ENCODE measurements at regions of chr1 and their contacts with region 1.

Region 1: GRCh38 chr1:175023043-175023921 is at the start of gene MRPS14:
- DNase-seq: peak; percentile 95
- H3K4me3 Mint-ChIP-seq: peak within 1 kb of the TSS; percentile 95
- H3K27ac Mint-ChIP-seq: peak within 1 kb of the TSS; percentile 93
- H3K4me1 Mint-ChIP-seq: peaks cover 19% of the 10 kb centered on the region
- H3K27me3 Mint-ChIP-seq: no peaks in the 10 kb centered on the region
- total RNA-seq, gene MRPS14: 29.2 and 29.9 TPM in 2 replicates

Region 2: DNA sequence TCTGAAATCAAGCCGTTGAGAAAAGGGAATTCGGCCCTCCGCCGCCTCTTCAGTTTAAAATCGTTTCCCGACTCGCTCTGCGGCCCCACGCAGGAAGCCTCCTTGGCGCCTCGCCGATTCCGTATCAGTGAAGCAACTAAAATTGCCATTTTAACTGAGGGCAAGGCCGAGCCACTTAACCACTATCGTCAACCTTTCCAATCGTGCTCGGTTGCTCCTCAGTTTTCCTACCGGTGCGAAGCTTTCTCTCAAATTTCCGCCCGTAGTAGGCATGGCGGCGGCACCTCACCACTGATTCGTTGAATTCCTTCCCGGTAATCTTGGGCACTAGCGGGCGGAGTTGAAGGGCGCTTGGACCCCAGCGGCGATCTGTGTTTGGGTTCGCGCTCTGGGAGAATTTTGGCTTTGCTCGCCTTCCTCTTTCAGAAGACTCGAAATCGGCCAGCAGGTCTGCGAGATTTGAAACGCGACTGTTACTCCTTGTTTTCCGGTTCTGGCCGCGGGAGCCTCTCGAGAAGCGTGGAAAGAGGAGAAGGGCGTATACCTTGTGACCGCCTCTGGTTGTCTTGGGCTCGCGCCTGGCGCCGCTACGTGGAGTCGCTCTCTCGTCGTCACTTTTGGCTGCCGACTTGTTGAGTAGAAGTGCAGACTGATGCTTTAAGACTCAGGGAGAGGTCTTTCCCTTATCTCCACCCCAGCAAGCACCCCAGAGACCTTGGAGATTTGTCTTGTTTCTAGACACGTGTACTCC is 1198.8 kb before region 1 on chr1 and contains the starts of genes CENPL and DARS2:
- intact Hi-C with region 1: loop called (anchors 1 kb)
- DNase-seq: peak; percentile 90
- H3K4me3 Mint-ChIP-seq: peak within 1 kb of the TSS; percentile 91
- H3K27ac Mint-ChIP-seq: peak within 1 kb of the TSS; percentile 95
- H3K4me1 Mint-ChIP-seq: peaks cover 48% of the 10 kb centered on the region
- H3K27me3 Mint-ChIP-seq: no peaks in the 10 kb centered on the region
- total RNA-seq, gene CENPL: 23.6 and 25.7 TPM in 2 replicates
- total RNA-seq, gene DARS2: 41.9 TPM in 2 replicates

Region 3: DNA sequence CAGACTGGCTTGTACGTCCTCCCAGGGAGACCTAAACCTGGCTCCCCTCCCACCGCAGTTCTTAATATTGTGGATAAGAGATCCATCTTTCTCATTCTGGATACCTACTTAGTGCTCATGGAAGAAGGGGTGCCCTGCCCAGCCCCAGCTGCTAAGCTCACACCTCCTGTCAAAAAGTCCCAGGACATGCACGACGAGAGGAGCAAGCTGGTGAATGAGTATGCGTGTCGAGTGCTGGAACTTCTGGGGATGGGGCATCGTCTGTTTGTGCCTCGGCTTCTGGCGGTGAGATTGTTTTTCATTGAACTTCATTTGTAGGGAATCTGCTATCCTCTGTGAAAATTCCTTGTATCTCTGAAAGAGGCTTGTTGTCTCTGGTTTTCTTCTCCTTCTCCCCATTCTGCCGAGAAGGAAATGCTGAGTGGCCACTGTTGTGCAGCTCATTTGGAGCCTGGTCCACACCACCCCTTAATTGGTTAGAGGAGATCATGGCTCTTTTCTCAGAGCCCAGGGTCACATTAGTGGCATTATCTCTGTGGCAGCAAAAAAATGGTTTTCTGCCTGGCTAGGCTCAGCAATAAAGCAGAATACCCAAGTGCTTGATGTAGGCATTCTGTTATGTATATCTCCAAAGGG is 222.9 kb before region 1 on chr1:
- intact Hi-C with region 1: loop called (anchors 1 kb)
- DNase-seq: peak; percentile 4
- H3K4me3 Mint-ChIP-seq: no peak overlapping the region
- H3K27ac Mint-ChIP-seq: no peak overlapping the region
- H3K4me1 Mint-ChIP-seq: peaks cover 15% of the 10 kb centered on the region
- H3K27me3 Mint-ChIP-seq: no peaks in the 10 kb centered on the region

Region 4: GRCh38 chr1:174902531-174903099 is 120.7 kb before region 1 on chr1:
- intact Hi-C with region 1: no loop called
- DNase-seq: no peak
- H3K4me3 Mint-ChIP-seq: no peak overlapping the region
- H3K27ac Mint-ChIP-seq: no peak overlapping the region
- H3K4me1 Mint-ChIP-seq: no peaks in the 10 kb centered on the region
- H3K27me3 Mint-ChIP-seq: no peaks in the 10 kb centered on the region

Region 5: DNA sequence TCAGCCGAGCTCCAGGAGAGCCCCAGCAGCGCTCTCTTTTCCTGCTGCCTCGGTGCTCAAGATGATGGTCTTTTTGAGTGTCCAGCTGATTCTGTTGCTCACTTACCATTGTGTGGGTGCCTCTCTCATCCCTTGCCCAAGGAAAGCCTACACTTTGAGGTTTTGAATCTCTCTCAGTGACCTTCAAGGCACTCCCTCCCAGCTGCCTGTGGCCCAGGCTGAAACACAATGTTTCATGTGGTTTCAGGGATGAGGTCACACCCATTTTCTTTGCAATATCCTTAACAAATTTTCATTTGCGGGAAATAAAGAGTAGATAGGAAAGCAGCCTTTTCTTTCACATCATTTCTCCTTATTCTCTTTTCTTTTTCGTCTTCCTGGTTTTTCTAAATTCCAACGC is 12.6 kb after region 1 on chr1:
- intact Hi-C with region 1: no loop called
- DNase-seq: no peak
- H3K4me3 Mint-ChIP-seq: no peak overlapping the region
- H3K27ac Mint-ChIP-seq: no peak overlapping the region
- H3K4me1 Mint-ChIP-seq: no peaks in the 10 kb centered on the region
- H3K27me3 Mint-ChIP-seq: peaks cover 12% of the 10 kb centered on the region

Region 6: GRCh38 chr1:175054736-175055135 is 31.5 kb after region 1 on chr1:
- intact Hi-C with region 1: no loop called
- DNase-seq: no peak
- H3K4me3 Mint-ChIP-seq: no peak overlapping the region
- H3K27ac Mint-ChIP-seq: no peak overlapping the region
- H3K4me1 Mint-ChIP-seq: no peaks in the 10 kb centered on the region
- H3K27me3 Mint-ChIP-seq: peaks cover 4% of the 10 kb centered on the region

Region 7: GRCh38 chr1:175072099-175072951 is 49.0 kb after region 1 on chr1:
- intact Hi-C with region 1: loop called (anchors 5 kb)
- DNase-seq: peak; percentile 12
- H3K4me3 Mint-ChIP-seq: peak overlapping the region; percentile 65
- H3K27ac Mint-ChIP-seq: peak overlapping the region; percentile 9
- H3K4me1 Mint-ChIP-seq: peaks cover 21% of the 10 kb centered on the region
- H3K27me3 Mint-ChIP-seq: peaks cover 14% of the 10 kb centered on the region

Region 8: GRCh38 chr1:175188936-175189335 is 165.7 kb after region 1 on chr1:
- intact Hi-C with region 1: loop called (anchors 2 kb)
- DNase-seq: peak; percentile 60
- H3K4me3 Mint-ChIP-seq: peak overlapping the region; percentile 99
- H3K27ac Mint-ChIP-seq: peak overlapping the region; percentile 84
- H3K4me1 Mint-ChIP-seq: peaks cover 75% of the 10 kb centered on the region
- H3K27me3 Mint-ChIP-seq: no peaks in the 10 kb centered on the region

Region 9: GRCh38 chr1:176206961-176207902 is 1184.0 kb after region 1 on chr1 and contains the start of gene COP1:
- intact Hi-C with region 1: loop called (anchors 1 kb)
- DNase-seq: peak; percentile 96
- H3K4me3 Mint-ChIP-seq: peak within 1 kb of the TSS; percentile 97
- H3K27ac Mint-ChIP-seq: peak within 1 kb of the TSS; percentile 99
- H3K4me1 Mint-ChIP-seq: peaks cover 29% of the 10 kb centered on the region
- H3K27me3 Mint-ChIP-seq: peaks cover 1% of the 10 kb centered on the region
- total RNA-seq, gene COP1: 49.2 and 51.7 TPM in 2 replicates

Measured in activated T-helper 1 cell treated with anti-CD3 and anti-CD28 coated beads, Interleukin-12 subunit alpha, Interleukin-12 subunit beta, Interleukin-2, Interleukin-4 antibody, amounts not matched to agents 30 ng/mL and 10 ng/mL and 1 ng/mL, durations not matched to agents 14 hours and 24 hours and 36 hours (primary cell).